HCT116 (cell line): ENCODE measurements at regions of chr5 and their contacts with region 1.

Region 1: DNA sequence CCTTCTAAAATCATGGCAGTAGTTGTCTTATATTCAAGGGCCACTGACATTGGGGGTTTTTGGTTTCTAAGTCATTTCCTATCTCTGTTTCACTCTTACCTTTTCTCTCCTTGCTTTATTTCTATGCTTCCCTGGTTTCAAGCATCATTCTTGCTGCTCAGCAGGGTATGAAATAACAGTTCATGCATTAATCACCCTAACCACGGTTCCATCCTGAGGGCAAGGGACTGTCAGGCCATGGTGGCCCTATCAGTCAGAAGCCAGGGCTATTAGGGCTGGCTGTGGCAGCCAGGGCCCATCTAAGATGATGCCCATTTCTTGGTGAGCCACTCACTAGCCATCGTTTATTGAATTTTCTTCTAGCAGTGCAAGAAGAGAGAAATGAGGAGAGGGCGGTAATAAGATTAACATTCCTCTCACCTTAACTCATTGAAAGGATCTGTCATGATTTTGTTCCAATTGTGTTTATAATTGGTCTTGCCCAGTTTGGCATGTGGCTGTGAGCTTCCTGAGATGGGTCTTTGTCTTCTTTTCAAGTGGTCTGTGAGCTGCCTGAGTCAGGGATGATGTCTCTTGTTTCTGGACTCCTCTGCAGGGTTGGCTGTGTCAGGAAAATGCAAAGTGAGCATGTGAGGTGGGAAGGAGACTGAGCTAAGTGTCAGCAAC is 45.2 kb downstream of the CYSTM1 start:
- DNase-seq: no peak
- ATAC-seq: peak; percentile 52
- H3K4me3 ChIP-seq: peak overlapping the region in 1 of 2 experiments; percentile 45; a peak in 2 of 4 replicates
- H3K27ac ChIP-seq: peak overlapping the region; percentile 87
- H3K4me1 ChIP-seq: peaks cover 77 to 89% of the 10 kb centered on the region in 2 experiments
- H3K27me3 ChIP-seq: no peaks in the 10 kb centered on the region
- CTCF ChIP-seq: no peak
- POLR2A ChIP-seq: no peak
- RAD21 ChIP-seq: no peak

Region 2: GRCh38 chr5:140073296-140073695 is 146.9 kb before region 1 on chr5:
- CTCF ChIA-PET with region 1: no interaction called
- POLR2A ChIA-PET with region 1: no interaction called
- RAD21 ChIA-PET with region 1: no interaction called
- intact Hi-C with region 1: loop called (anchors 10 kb)
- DNase-seq: no peak
- ATAC-seq: no peak
- H3K4me3 ChIP-seq: no peak overlapping the region
- H3K27ac ChIP-seq: no peak overlapping the region
- H3K4me1 ChIP-seq: 0 out of 4 replicates have a peak, but pooled peaks cover 0 to 4% of the 10 kb centered on the region in 2 experiments
- H3K27me3 ChIP-seq: no peaks in the 10 kb centered on the region
- CTCF ChIP-seq: peak; percentile 36 to 79 (median 68)
- POLR2A ChIP-seq: no peak
- RAD21 ChIP-seq: peak; percentile 78

Region 3: DNA sequence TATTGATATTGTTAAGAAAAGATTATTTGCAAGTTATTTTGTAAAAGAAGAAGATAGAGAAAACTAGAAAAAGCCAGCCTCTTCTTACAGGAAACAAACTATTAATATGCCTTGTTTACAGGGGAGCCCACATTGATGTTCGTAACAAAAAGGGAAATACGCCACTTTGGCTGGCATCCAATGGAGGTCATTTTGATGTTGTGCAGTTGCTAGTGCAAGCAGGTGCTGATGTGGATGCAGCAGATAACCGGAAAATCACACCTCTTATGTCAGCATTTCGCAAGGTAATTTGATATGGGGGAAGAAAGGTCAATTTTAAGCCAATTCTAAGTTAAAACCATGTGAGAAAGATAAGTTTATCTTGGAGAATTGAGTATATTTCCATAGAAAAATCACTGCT is 289.7 kb after region 1 on chr5:
- CTCF ChIA-PET with region 1: no interaction called
- POLR2A ChIA-PET with region 1: no interaction called
- RAD21 ChIA-PET with region 1: no interaction called
- intact Hi-C with region 1: no loop called
- DNase-seq: no peak
- ATAC-seq: no peak
- H3K4me3 ChIP-seq: no peak overlapping the region
- H3K27ac ChIP-seq: no peak overlapping the region
- H3K4me1 ChIP-seq: no peaks in the 10 kb centered on the region
- H3K27me3 ChIP-seq: no peaks in the 10 kb centered on the region
- CTCF ChIP-seq: no peak
- POLR2A ChIP-seq: no peak
- RAD21 ChIP-seq: no peak